KBM-7 (cell line): ENCODE measurements at regions of chr20 and their contacts with region 1.

Region 1: GRCh38 chr20:49853640-49854039 is 41.0 kb downstream of the SLC9A8 start:
- DNase-seq: no peak

Region 2: GRCh38 chr20:49610701-49611538 is 242.7 kb before region 1 on chr20:
- in situ Hi-C with region 1: loop called (anchors 25 kb)
- DNase-seq: peak; percentile 86

Region 3: GRCh38 chr20:49641683-49642656 is 211.7 kb before region 1 on chr20:
- in situ Hi-C with region 1: no loop called
- DNase-seq: no peak